Mammary epithelial cell (primary cell): ENCODE measurements at regions of chr3 and their contacts with region 1.

Region 1: GRCh38 chr3:85821130-85821756 is 862.5 kb downstream of the CADM2 start:
- DNase-seq: peak; percentile 14
- H3K4me3 ChIP-seq: no peak overlapping the region
- H3K27ac ChIP-seq: no peak overlapping the region
- H3K4me1 ChIP-seq: no peaks in the 10 kb centered on the region
- H3K27me3 ChIP-seq: no peaks in the 10 kb centered on the region
- CTCF ChIP-seq: peak; percentile 64 to 76

Region 2: DNA sequence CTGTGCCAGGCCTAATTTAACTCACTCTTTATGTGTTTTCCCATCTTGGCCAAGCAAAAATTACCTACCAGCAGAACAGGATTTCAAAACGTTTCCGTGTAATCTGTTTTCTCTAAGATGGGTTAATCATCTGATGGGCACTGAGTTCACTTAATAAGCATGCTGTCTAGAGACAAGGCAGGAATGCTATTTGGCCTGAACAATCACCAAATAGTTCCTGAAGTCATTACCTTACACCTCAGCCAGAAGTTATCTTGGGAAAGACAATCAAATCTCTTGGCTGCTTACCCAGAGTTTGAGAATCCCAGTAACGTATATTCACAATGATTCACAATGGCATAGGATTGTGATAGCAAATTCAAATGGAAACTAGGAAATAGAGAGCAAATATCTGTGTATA is 83.4 kb before region 1 on chr3:
- CTCF ChIA-PET with region 1: no interaction called
- dilution Hi-C with region 1: no loop called
- in situ Hi-C with region 1: no loop called
- intact Hi-C with region 1: no loop called
- DNase-seq: peak; percentile 81
- H3K4me3 ChIP-seq: no peak overlapping the region
- H3K27ac ChIP-seq: no peak overlapping the region
- H3K4me1 ChIP-seq: no peaks in the 10 kb centered on the region
- H3K27me3 ChIP-seq: no peaks in the 10 kb centered on the region
- CTCF ChIP-seq: no peak

Region 3: DNA sequence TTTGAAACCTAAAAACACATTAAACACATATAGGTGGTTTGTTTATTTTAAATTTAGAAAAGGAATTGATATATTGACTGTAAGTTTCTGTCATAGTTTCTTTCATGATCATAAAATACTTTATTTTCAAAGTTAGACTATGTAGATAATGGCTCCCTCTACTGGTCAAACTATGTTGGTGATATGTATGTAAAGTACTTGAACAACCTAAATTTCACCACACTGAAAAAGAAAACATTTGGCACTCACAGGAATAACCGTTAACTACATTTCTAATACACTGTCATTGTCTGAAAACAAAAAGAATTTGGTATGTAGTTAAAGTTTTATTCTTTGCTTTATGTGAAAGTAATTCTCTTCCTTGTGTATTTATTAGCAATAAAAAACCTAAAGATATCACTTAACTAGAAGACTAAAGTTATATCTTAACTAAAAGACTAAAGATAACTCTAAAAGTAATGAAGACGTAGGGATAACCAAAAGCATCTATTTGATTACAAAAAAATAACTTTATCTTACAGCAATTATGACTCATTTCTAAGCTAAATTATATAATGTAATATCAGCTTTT is 742.2 kb after region 1 on chr3:
- CTCF ChIA-PET with region 1: no interaction called
- dilution Hi-C with region 1: no loop called
- in situ Hi-C with region 1: loop called in 1 of 2 experiments (anchors 10 kb)
- intact Hi-C with region 1: loop called (anchors 2 kb)
- DNase-seq: peak; percentile 15
- H3K4me3 ChIP-seq: no peak overlapping the region
- H3K27ac ChIP-seq: no peak overlapping the region
- H3K4me1 ChIP-seq: no peaks in the 10 kb centered on the region
- H3K27me3 ChIP-seq: peaks cover 2% of the 10 kb centered on the region
- CTCF ChIP-seq: peak; percentile 59 to 62

Region 4: DNA sequence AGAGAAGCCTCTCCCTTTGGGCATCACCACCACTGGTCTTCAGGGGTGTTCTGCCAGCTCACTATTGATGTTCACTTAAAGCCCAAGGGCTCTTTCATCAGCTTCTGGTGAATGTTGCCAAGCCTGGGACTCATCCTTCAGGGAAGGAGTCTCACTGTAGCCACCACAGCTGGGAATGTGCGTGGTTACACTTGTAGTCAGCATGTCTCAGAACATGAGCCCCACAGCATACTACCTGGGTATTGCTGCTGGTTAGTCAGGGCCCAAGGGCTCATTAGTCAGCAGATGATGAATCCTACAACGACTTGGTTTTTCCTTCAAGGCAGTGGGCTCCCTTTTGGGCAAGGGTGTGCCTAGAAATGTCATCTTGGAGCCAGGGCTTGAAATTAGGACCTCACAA is 756.8 kb after region 1 on chr3:
- CTCF ChIA-PET with region 1: no interaction called
- dilution Hi-C with region 1: no loop called
- in situ Hi-C with region 1: loop called in 1 of 2 experiments (anchors 10 kb)
- intact Hi-C with region 1: no loop called
- DNase-seq: peak; percentile 46
- H3K4me3 ChIP-seq: no peak overlapping the region
- H3K27ac ChIP-seq: no peak overlapping the region
- H3K4me1 ChIP-seq: no peaks in the 10 kb centered on the region
- H3K27me3 ChIP-seq: no peaks in the 10 kb centered on the region
- CTCF ChIP-seq: no peak